ENCODE measurements at regions of chr10 and their contacts with region 1.

Region 1: DNA sequence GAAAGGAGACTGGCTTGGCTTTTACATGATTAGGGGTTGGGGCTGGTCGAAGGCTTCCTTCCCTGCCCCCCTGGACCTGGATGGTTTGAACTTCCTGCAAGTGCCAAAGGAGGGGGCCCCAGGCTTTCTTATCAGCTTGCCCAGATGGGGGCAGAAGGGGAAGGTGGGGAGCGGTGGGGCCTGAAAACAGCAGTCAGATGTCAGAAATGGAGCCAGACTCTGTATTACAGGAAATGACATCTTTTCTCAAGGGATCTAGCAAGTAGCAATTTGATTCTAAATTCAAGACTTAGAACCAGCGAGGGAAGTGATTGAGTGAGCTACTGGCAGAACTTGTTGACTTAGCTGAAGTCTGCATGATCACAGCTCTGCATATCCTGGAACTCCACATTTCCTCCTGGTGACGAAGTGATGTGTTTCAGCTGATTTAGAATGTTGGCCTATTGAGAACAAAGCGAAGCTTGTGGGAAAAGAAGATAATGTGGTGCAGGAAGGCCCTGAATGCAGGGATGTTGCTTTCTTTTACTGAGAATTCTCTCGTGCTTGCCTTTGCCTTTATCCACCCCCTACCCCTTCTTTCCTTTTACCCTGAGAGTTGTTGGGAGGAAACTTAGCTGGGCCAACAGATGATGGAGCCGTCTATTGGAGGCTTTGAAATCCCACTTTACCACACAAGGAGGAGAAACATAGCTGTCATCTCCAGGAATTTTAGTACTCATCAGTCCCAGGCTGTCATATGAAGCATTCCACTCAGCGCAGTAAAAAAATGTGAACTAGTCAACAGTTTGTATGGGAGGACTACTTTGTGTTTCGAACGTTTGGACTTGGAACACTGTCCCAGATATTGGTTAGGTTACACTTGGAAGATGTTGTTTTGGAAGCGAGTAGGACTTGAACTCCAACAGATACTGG is 43.2 kb downstream of the CCNY start:
- DNase-seq: peak; percentile 49
- ATAC-seq: peak; percentile 96
- H3K4me3 Mint-ChIP-seq: peak overlapping the region; percentile 68
- H3K27ac Mint-ChIP-seq: peak overlapping the region; percentile 91
- H3K4me1 Mint-ChIP-seq: peaks cover 58% of the 10 kb centered on the region
- H3K27me3 Mint-ChIP-seq: no peaks in the 10 kb centered on the region
- CTCF ChIP-seq: no peak

Region 2: GRCh38 chr10:35236739-35237138 is 142.7 kb before region 1 on chr10:
- CTCF ChIA-PET with region 1: no interaction called
- POLR2A ChIA-PET with region 1: no interaction called
- intact Hi-C with region 1: loop called (anchors 2 kb)
- DNase-seq: no peak
- ATAC-seq: no peak
- H3K4me3 Mint-ChIP-seq: no peak overlapping the region
- H3K27ac Mint-ChIP-seq: no peak overlapping the region
- H3K4me1 Mint-ChIP-seq: no peaks in the 10 kb centered on the region
- H3K27me3 Mint-ChIP-seq: no peaks in the 10 kb centered on the region
- CTCF ChIP-seq: no peak

Region 3: DNA sequence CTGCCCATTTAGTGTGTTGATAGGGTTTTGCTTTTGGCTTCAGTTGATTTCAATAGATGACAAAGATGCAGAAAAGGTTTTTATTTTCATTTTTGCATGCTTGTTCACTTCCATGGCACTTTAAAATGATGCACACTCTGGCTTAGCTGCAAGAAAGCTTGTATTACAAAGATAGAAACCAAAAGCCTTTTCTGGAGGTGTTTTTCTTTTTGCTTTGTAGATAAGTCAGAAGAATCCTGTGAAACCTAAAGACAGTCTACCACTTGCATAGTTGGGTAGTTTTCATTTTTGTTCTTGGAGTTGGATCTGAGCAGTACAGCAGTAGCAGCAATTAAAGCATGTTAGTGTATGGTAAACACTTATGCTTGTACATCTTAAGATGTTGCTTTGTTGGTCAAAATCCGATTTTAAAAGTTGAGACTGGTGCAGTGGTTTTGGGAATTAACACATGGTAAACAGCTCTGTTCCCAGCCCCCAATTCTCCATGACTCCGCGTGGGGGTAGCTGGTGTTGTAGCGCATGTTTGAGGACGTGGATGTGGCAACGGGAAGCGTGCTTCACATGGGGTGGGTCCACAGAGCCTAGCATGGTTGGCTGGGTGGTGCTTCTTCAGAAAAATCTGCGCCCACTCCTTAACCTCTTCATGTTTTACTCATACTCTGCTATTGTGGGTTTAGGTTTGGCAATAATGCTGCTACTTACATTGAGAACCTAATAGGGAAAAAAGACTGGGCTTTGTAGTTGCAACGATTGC is 23.3 kb before region 1 on chr10:
- CTCF ChIA-PET with region 1: no interaction called
- POLR2A ChIA-PET with region 1: no interaction called
- intact Hi-C with region 1: loop called (anchors 2 kb)
- DNase-seq: no peak
- ATAC-seq: no peak
- H3K4me3 Mint-ChIP-seq: no peak overlapping the region
- H3K27ac Mint-ChIP-seq: peak overlapping the region; percentile 3
- H3K4me1 Mint-ChIP-seq: peaks cover 81% of the 10 kb centered on the region
- H3K27me3 Mint-ChIP-seq: no peaks in the 10 kb centered on the region
- CTCF ChIP-seq: no peak

Region 4: GRCh38 chr10:35451151-35452016 is 71.9 kb after region 1 on chr10:
- CTCF ChIA-PET with region 1: no interaction called
- POLR2A ChIA-PET with region 1: interaction called, 3 read pairs
- intact Hi-C with region 1: loop called (anchors 5 kb)
- DNase-seq: no peak
- ATAC-seq: peak; percentile 94
- H3K4me3 Mint-ChIP-seq: peak overlapping the region; percentile 1
- H3K27ac Mint-ChIP-seq: peak overlapping the region; percentile 73
- H3K4me1 Mint-ChIP-seq: peaks cover 80% of the 10 kb centered on the region
- H3K27me3 Mint-ChIP-seq: no peaks in the 10 kb centered on the region
- CTCF ChIP-seq: no peak

Region 5: DNA sequence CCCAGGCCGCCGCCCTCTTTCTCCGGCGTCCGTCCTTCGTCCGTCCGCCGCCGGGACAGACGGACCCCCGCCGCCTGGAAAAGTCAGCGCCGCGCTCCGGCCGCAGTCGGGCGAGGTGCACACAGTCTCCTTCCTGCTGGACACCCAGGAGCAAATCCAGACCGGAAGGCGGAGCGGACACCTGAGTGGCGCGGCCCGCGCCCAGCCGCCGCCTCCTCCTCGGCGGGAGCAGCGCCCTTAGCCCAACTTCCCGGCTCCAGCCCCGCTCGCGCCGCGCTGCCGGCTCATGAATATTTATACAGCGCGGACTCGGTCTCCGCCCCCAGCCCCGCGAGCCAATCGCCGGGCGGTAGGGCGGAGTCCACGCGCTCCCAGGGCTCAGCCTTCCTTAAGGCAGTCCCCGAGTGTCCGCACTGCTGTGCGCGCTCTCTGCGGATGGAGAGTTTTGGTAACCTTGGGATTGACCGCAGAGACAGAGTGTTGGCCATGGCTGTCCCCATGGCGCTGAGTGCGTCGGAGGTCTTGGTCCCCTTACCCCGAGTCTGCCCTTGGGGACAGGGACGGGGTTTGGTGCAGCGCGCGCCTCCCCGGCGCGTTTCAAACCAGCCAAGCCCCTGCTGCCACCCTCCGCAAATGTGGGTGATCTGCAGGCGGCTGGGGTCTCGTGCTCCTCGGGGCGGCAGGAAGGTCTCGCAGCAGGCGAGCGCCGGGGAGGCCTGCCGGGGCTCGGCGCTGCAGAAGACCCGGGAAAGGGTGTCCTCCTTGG is 262.7 kb after region 1 on chr10 and contains the start of gene FZD8:
- CTCF ChIA-PET with region 1: no interaction called
- POLR2A ChIA-PET with region 1: no interaction called
- intact Hi-C with region 1: loop called (anchors 1 kb)
- DNase-seq: peak; percentile 69
- ATAC-seq: peak; percentile 87
- H3K4me3 Mint-ChIP-seq: peak within 1 kb of the TSS; percentile 88
- H3K27ac Mint-ChIP-seq: no peak within 1 kb of the TSS
- H3K4me1 Mint-ChIP-seq: peaks cover 30% of the 10 kb centered on the region
- H3K27me3 Mint-ChIP-seq: peaks cover 33% of the 10 kb centered on the region
- CTCF ChIP-seq: no peak
- total RNA-seq, gene FZD8: 0.17 and 0.22 TPM in 2 replicates

Region 6: GRCh38 chr10:36725581-36726520 is 1346.4 kb after region 1 on chr10:
- CTCF ChIA-PET with region 1: no interaction called
- POLR2A ChIA-PET with region 1: no interaction called
- intact Hi-C with region 1: loop called (anchors 2 kb)
- DNase-seq: no peak
- ATAC-seq: peak; percentile 37
- H3K4me3 Mint-ChIP-seq: no peak overlapping the region
- H3K27ac Mint-ChIP-seq: no peak overlapping the region
- H3K4me1 Mint-ChIP-seq: no peaks in the 10 kb centered on the region
- H3K27me3 Mint-ChIP-seq: no peaks in the 10 kb centered on the region
- CTCF ChIP-seq: no peak

Region 7: GRCh38 chr10:36880898-36881297 is 1501.4 kb after region 1 on chr10:
- CTCF ChIA-PET with region 1: no interaction called
- POLR2A ChIA-PET with region 1: no interaction called
- intact Hi-C with region 1: loop called (anchors 5 kb)
- DNase-seq: no peak
- ATAC-seq: no peak
- H3K4me3 Mint-ChIP-seq: no peak overlapping the region
- H3K27ac Mint-ChIP-seq: no peak overlapping the region
- H3K4me1 Mint-ChIP-seq: no peaks in the 10 kb centered on the region
- H3K27me3 Mint-ChIP-seq: peaks cover 2% of the 10 kb centered on the region
- CTCF ChIP-seq: no peak